ENCODE measurements at regions of chr3 and their contacts with region 1.

Region 1: DNA sequence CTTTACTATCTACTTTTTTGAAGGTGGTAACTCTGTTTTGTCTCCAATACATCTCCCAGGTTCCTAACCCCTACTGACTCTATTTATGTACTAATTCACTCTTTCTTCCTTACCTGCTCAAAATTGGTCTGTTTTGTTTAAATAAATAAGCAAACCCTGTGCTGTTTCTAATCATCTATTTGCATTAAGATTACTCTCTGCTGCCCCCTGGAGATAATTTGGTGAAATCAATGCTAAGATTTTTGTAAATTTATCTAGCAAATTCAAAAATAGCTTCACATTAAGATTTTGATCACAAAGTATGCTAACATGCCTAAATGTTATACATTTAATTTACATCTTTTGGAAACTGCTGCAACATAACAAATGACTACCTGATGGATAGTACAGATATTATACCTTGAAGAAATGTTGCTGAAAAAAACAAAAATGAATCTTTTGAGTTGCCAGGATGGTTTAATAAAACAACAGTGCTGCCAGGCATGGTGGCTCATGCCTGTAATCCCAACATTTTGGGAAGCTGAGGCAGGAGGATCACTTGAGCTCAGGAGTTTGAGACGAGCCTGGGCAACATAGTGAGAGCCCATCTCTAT is 4.4 kb upstream of the CD200R1 start:
- DNase-seq: no peak
- ATAC-seq: no peak

Region 2: GRCh38 chr3:112734718-112735350 is 244.5 kb before region 1 on chr3:
- intact Hi-C with region 1: loop called (anchors 10 kb)
- DNase-seq: no peak
- ATAC-seq: peak; percentile 60

Region 3: DNA sequence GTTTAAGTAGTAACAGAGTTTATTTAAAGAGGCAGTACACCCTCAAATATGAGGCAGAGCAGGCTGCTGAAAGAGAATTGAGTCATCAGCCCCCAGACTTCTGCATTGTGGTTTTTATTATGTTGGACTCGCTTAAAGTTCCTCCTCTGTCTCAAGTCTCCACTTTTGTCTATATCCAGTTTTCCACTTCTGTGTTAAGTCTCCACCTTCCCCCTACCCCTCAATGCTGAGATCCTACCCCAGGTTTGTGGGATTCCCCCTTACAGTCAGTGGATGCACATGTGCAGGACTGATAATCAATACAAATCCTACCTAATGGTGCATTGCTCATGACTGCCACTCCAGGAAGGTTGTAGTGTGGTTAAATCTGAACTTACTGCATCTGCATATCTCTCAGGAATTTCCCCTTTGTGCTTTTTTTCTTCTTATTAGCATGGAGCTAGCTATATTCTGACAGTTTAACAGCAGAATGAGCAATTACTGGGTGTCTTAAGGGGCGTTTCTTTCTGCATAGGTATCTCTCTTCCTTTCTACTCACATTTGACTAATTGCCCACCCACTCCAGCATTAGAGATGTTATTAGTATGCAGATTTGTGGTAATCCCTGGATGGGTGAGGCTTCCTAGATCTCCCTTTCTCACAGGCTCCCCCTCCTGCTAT is 120.8 kb before region 1 on chr3:
- intact Hi-C with region 1: no loop called
- DNase-seq: no peak
- ATAC-seq: no peak

Region 4: GRCh38 chr3:113660896-113661295 is 681.6 kb after region 1 on chr3:
- intact Hi-C with region 1: no loop called
- DNase-seq: no peak
- ATAC-seq: peak; percentile 87

Measured in Right ventricle myocardium superior (tissue), 1 donor.